CD4-positive, alpha-beta memory T cell (primary cell): ENCODE measurements at regions of chr19 and their contacts with region 1.

Region 1: DNA sequence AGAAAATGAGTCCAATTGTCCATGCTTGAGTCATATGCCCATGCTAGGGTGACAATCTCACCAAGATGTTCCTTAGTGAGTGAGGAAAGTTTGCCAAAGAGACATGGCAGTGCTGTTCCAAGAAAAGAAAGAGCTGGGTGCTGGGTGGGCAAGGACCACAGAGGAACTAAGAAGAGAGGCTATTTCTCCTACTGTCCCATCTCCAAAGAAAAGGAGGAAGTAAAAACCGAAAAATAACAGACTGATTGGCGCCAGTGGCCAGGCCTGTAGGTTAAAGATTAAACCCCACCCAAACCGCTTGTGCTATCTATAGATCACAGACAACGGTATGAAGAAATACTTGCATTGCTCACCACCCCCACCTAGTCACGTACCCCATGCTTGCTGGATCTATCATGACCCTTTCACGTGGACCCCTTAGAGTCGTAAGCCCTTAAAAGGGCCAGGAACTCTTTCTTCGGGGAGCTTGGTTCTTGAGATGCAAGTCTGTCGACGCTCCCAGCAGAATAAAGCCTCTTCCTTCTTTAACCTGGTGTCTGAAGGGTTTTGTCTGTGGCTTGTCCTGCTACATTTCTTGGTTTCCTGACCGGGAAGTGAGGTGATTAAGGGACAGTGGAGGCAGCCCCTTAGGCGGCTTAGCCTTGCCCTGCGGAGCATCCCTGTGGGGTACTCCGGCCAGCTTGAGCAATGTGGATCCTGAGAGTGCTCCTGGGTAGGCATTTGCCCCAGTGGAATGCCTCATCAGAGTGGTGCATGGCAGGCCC is 606.5 kb downstream of the UQCRFS1 start:
- DNase-seq: no peak
- H3K4me3 ChIP-seq: no peak overlapping the region
- H3K4me3 Mint-ChIP-seq: no peak overlapping the region
- H3K27ac ChIP-seq: no peak overlapping the region
- H3K27ac Mint-ChIP-seq: no peak overlapping the region
- H3K4me1 ChIP-seq: no peaks in the 10 kb centered on the region
- H3K4me1 Mint-ChIP-seq: no peaks in the 10 kb centered on the region
- H3K27me3 ChIP-seq: no peaks in the 10 kb centered on the region
- H3K27me3 Mint-ChIP-seq: no peaks in the 10 kb centered on the region

Region 2: DNA sequence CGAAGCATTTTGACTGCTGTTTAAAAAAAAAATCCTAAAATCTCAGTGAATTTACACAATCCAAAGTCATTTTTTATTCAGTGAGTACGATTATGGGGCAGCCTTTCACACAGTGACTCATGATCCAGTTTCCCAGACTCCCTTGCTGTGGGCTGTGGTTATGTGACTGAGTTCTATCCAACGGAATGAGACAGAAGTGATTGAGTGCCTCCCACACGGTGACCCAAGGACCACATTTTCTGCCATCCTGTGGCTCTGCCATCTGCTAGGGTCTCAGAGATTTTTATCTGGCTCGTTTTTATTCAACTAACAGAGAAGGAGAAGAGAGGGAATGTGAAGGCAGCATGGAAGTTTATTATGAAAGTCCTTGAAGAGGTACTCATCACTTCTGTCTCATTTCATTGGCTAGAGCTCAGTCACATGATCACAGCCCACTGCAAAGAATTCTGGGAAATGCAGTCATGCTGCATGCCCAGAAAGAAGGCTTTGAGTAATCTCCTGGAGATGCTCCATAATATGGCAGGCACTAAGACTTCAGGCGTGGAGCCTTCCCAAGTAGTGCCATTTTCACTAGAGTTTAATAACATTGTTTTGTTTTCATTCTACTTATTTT is 392.9 kb before region 1 on chr19:
- CTCF ChIA-PET with region 1: no interaction called
- POLR2A ChIA-PET with region 1: no interaction called
- intact Hi-C with region 1: loop called (anchors 5 kb)
- DNase-seq: no peak
- H3K4me3 ChIP-seq: no peak overlapping the region
- H3K4me3 Mint-ChIP-seq: no peak overlapping the region
- H3K27ac ChIP-seq: no peak overlapping the region
- H3K27ac Mint-ChIP-seq: no peak overlapping the region
- H3K4me1 ChIP-seq: no peaks in the 10 kb centered on the region
- H3K4me1 Mint-ChIP-seq: no peaks in the 10 kb centered on the region
- H3K27me3 ChIP-seq: no peaks in the 10 kb centered on the region
- H3K27me3 Mint-ChIP-seq: no peaks in the 10 kb centered on the region